IMR-90 (cell line): ENCODE measurements at regions of chr10 and their contacts with region 1.

Region 1: GRCh38 chr10:7417103-7417623 is 6.3 kb upstream of the SFMBT2 start:
- DNase-seq: peak; percentile 64
- ATAC-seq: peak; percentile 42; the same call in 1 of the 2 replicates
- H3K4me3 ChIP-seq: no peak overlapping the region
- H3K27ac ChIP-seq: no peak overlapping the region
- H3K4me1 ChIP-seq: no peaks in the 10 kb centered on the region
- H3K27me3 ChIP-seq: peaks cover 17% of the 10 kb centered on the region
- CTCF ChIP-seq: peak; percentile 69
- POLR2A ChIP-seq: no peak
- RAD21 ChIP-seq: peak; percentile 72

Region 2: DNA sequence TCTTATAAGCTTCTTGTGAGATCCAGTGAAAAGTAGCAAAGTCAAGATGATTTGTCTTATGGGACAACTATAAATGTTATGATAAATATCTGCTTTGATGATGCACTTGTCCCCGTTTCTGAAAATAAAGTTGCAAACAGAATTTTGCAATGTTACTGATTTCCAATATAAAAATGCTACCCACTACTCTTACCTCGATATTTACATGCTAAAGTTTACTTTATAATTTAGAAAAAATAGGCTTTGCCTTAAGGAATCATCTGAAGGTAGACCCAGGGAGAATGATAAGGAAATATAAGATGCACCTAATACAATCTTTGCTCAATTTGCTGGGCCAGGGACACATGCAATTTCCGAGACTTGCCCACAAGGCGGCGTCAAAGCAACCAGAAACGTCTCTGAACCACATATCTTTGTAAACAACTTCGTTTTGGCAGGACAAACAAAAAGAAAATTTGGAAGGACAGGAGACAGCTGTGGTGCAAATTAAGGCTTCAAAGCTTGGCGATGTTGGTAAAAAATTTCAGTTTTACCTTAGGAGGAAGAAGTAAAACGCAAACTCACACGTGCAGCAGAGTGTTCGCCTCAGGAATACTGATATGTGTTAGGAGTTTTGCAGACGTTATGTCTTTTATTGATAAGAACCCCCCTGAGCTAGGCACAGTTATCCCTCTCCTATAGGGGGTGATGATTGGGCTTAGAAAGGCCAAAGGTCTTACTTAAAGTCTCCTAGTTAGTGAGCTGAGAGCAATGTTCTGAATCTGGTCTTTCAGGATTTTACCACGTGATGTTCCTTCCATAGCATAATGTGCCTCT is 971.5 kb before region 1 on chr10:
- CTCF ChIA-PET with region 1: no interaction called
- POLR2A ChIA-PET with region 1: no interaction called
- dilution Hi-C with region 1: no loop called
- in situ Hi-C with region 1: no loop called
- intact Hi-C with region 1: loop called (anchors 1 kb)
- DNase-seq: peak; percentile 28
- ATAC-seq: peak; percentile 72
- H3K4me3 ChIP-seq: no peak overlapping the region
- H3K27ac ChIP-seq: no peak overlapping the region
- H3K4me1 ChIP-seq: no peaks in the 10 kb centered on the region
- H3K27me3 ChIP-seq: peaks cover 2% of the 10 kb centered on the region; the same call in 1 of the 2 replicates
- CTCF ChIP-seq: peak; percentile 54
- POLR2A ChIP-seq: no peak
- RAD21 ChIP-seq: peak; percentile 34

Region 3: DNA sequence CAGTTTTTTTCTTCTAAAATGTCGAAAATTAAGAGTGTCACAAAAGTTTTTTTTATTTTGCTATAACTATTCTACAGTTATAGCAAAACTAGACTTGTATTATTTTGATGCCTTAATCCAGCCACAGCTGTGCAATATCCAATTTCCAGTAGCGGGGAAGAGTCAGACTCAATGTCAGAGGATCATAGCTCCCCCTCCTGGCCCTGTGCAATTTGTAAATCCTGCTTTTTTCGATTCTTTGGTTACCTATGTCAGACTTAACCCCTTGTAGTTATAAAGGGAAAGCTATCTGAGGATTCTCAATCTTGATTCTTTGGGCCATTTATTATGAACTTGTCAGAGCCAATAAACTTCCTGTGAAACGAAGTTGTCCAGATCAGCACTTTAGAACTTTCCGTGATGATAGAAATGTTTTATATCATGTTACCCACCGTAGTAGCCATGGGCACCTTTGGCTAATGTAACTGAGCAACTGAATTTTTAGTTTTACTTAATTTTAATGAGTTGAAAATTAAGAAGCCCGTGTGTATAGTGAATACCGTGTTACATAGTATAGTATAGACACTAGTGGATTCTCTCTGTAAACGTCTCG is 749.4 kb before region 1 on chr10:
- CTCF ChIA-PET with region 1: no interaction called
- POLR2A ChIA-PET with region 1: no interaction called
- dilution Hi-C with region 1: no loop called
- in situ Hi-C with region 1: loop called (anchors 5 kb)
- intact Hi-C with region 1: loop called (anchors 1 kb)
- DNase-seq: peak; percentile 43
- ATAC-seq: peak; percentile 85
- H3K4me3 ChIP-seq: no peak overlapping the region
- H3K27ac ChIP-seq: no peak overlapping the region
- H3K4me1 ChIP-seq: no peaks in the 10 kb centered on the region
- H3K27me3 ChIP-seq: no peaks in the 10 kb centered on the region; the same call in 1 of the 2 replicates
- CTCF ChIP-seq: peak; percentile 52
- POLR2A ChIP-seq: no peak
- RAD21 ChIP-seq: peak; percentile 47

Region 4: DNA sequence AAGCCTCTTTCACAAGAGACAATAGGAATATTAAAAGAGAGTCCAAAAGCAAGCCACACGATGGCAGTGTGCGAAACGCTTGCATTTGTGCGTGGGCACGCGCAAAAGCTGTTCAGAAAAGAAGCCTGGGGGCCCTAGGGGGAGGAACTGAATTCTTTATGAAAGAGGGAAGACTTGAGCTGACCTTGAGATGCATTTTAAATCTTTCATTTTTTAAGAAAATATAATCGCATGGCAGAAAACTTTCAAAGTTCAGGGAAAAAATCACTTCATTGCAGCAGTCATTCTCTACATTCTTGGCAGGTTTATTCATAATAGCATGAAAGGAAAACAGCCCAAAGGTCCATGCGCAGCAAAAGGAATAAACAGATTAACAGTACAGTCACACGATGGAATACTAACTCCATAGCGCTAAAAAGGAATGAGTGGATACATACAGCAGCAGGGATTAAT is 630.6 kb before region 1 on chr10:
- CTCF ChIA-PET with region 1: interaction called, 3 read pairs
- POLR2A ChIA-PET with region 1: no interaction called
- dilution Hi-C with region 1: no loop called
- in situ Hi-C with region 1: loop called (anchors 10 kb)
- intact Hi-C with region 1: loop called (anchors 2 kb)
- DNase-seq: peak; percentile 79
- ATAC-seq: peak; percentile 92
- H3K4me3 ChIP-seq: peak overlapping the region; percentile 9; the same call in 1 of the 2 replicates
- H3K27ac ChIP-seq: peak overlapping the region; percentile 63
- H3K4me1 ChIP-seq: peaks cover 7% of the 10 kb centered on the region
- H3K27me3 ChIP-seq: no peaks in the 10 kb centered on the region
- CTCF ChIP-seq: peak; percentile 63
- POLR2A ChIP-seq: no peak
- RAD21 ChIP-seq: peak; percentile 61

Region 5: DNA sequence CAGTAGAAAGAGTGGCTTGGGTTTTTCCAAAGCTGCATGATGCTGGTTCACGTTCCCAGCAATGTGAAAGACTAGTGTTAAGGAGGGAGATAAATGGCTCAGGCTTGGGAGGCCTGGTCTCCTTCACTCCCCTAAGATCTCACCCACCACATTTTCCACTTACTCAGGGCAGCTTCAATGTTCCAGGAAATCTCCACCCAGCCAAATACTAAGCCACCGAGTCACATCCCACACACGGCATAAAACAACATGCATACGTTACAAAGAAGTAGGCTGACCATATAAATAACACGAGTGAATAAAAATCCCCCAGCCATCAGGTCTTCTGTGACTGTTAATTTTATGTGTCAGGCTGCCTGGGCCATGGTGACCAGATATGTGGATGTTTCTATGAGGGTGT is 309.9 kb before region 1 on chr10:
- CTCF ChIA-PET with region 1: no interaction called
- POLR2A ChIA-PET with region 1: no interaction called
- dilution Hi-C with region 1: no loop called
- in situ Hi-C with region 1: no loop called
- intact Hi-C with region 1: no loop called
- DNase-seq: peak; percentile 83
- ATAC-seq: peak; percentile 53
- H3K4me3 ChIP-seq: no peak overlapping the region
- H3K27ac ChIP-seq: 0 out of 2 replicates have a peak overlapping the region, but pooled peaks have one; percentile 10
- H3K4me1 ChIP-seq: peaks cover 2% of the 10 kb centered on the region; the same call in 1 of the 2 replicates
- H3K27me3 ChIP-seq: no peaks in the 10 kb centered on the region
- CTCF ChIP-seq: no peak
- POLR2A ChIP-seq: no peak
- RAD21 ChIP-seq: no peak

Region 6: DNA sequence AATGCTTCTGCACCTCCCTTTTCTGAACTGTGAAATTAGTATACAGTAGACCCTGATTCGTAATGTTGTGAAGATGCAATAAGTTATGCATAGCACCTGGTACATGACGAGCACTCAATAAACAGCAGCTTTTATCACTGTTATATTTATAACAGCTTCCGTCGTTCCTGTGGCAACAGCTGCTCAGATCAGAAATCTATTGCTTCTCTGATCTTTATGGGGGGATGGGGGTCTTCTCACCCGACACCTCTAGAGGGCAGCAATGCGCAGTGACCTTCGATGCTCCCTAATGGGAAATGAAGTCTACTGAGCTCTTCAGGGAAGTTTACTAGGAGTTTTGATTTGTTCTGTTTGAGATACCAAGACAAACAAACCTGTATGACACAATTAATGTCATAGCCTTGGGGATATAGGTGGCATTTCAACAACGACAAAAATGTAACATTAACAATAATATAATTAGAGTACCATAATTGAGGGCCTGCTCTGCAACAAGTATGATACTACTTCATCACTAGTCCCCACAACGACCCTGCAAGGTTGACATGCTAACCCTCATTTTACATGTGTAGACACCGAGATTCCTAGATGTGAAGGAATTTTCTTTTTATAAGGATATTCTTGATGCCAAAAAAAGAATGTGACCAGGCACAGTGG is 295.9 kb before region 1 on chr10:
- CTCF ChIA-PET with region 1: interaction called, 3 read pairs
- POLR2A ChIA-PET with region 1: no interaction called
- dilution Hi-C with region 1: no loop called
- in situ Hi-C with region 1: no loop called
- intact Hi-C with region 1: loop called (anchors 5 kb)
- DNase-seq: peak; percentile 10
- ATAC-seq: peak; percentile 46; the same call in 1 of the 2 replicates
- H3K4me3 ChIP-seq: no peak overlapping the region
- H3K27ac ChIP-seq: no peak overlapping the region
- H3K4me1 ChIP-seq: no peaks in the 10 kb centered on the region
- H3K27me3 ChIP-seq: no peaks in the 10 kb centered on the region
- CTCF ChIP-seq: peak; percentile 31
- POLR2A ChIP-seq: no peak
- RAD21 ChIP-seq: no peak; the same call in 1 of the 2 replicates

Region 7: DNA sequence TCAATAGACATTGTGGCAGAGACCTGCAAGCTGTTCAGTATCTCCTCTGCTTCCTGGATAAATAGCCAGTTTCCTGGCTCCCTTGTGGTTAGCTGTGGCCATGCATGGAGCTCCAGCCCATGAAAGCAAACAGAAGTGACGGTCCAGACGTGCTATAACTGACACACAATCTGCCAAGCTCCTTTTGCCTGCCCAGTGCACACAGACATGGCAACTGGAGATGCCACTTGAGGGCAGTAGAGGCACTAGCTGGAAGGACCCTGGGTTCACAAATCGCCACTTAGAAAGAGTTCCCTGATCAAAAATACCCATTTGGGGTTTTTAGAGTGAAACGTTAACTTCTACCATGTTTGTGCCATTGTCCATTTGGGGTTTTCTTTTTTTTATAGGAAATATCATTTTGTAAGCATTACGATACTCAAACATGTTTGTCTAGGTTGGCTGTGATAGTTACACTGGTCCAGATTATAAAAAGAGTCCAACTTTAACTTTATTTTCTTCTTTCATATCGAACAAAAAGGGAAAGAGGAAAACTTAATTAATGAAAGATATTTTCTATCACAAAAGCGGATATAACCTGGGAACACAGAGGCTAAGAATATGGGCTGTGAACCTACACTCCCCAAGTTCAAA is 339.3 kb after region 1 on chr10:
- CTCF ChIA-PET with region 1: no interaction called
- POLR2A ChIA-PET with region 1: no interaction called
- dilution Hi-C with region 1: no loop called
- in situ Hi-C with region 1: no loop called
- intact Hi-C with region 1: no loop called
- DNase-seq: peak; percentile 8
- ATAC-seq: peak; percentile 56; the same call in 1 of the 2 replicates
- H3K4me3 ChIP-seq: no peak overlapping the region
- H3K27ac ChIP-seq: no peak overlapping the region
- H3K4me1 ChIP-seq: no peaks in the 10 kb centered on the region
- H3K27me3 ChIP-seq: no peaks in the 10 kb centered on the region
- CTCF ChIP-seq: peak; percentile 36; the same call in 1 of the 2 replicates
- POLR2A ChIP-seq: no peak
- RAD21 ChIP-seq: peak; percentile 37; the same call in 1 of the 2 replicates